RWPE1 (cell line): ENCODE measurements at regions of chr5 and their contacts with region 1.

Region 1: DNA sequence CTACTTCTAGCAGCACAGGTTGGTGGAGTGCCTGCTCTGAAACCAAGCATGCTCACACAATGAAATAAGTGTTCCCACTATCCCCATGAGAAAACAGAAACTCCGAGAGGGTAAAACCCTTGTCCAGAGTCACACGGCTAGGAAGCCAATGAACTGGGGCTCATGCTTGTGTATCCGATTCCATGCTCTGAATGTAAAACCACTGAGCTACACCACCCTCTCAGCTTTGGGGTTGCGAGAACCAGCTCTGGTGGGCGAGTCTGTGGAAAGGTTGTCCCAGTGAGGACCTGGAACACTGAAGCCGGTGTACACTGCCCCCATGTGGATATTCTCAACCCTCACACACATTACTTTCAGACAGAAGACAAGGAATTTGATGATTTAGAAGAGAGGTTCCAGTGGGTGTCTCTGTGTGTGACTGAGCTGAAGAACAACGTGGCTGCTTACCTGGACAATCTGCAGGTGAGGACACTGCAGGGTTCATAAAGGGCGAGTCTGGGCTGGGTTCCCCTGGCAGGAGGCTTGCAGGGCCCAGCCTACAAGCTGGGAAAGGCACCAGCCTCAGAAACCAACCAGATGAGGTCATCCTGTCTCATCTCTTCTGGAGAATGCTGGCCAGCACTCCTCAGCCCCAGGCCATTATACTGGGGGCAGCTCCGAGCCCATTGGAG is 37.4 kb downstream of the ARHGEF37 start:
- DNase-seq: peak; percentile 93
- H3K27ac ChIP-seq: peak overlapping the region; percentile 80
- CTCF ChIP-seq: peak; percentile 85

Region 2: DNA sequence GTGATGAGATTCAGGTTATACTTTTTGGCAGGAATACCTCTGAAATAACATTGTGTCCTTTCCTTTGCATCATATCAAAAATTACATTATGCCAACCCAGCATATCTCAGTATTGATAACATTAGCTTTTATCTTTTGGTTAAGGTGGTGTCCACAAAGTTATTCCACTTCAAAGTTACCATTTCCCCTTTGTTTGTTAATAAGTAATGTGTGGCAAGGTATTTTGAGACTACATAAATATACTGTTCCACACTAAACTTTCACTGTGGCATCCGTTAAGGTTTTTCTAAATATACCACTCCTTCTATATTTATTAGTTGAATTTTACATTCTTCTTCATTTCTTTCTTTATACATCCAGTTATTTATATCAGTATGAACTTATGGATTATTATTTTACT is 51.5 kb before region 1 on chr5:
- CTCF ChIA-PET with region 1: interaction called, 10 read pairs
- POLR2A ChIA-PET with region 1: interaction called, 4 read pairs
- DNase-seq: no peak
- H3K27ac ChIP-seq: no peak overlapping the region
- CTCF ChIP-seq: no peak

Region 3: DNA sequence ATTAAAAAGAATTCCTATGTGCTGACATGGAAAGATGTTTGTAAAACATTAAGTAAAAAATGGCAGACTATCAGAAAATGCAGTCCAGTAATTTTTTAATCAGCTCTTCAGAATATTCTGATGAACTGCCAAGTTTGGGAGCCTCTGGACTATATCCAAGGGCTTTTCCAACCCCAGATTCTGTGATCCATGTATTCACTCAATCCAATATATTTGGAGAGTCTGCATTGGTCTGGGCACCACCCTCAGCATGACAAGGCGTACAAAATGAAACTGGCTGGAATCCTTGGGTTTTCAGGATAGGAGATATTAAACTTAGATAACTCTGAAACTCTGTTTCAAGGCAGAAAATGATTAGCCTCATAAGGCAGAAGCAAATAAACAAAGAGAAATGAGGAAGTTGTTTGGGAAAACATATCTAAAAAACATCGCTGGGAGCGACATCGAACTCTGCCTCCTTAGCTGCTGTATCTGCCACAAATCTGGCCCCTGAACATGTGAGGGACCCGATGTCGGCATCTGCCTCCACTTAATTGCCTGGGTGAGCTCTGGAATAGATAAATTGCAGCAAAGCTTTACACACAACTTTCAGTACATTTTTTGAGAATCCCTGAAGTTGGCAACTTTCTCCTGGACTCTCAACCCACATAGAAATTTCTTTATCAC is 311.5 kb after region 1 on chr5:
- CTCF ChIA-PET with region 1: no interaction called
- POLR2A ChIA-PET with region 1: interaction called, 15 read pairs
- DNase-seq: no peak
- H3K27ac ChIP-seq: peak overlapping the region; percentile 24; the same call in 1 of the 2 replicates
- CTCF ChIP-seq: no peak